ENCODE measurements at regions of chr5 and their contacts with region 1.

Region 1: DNA sequence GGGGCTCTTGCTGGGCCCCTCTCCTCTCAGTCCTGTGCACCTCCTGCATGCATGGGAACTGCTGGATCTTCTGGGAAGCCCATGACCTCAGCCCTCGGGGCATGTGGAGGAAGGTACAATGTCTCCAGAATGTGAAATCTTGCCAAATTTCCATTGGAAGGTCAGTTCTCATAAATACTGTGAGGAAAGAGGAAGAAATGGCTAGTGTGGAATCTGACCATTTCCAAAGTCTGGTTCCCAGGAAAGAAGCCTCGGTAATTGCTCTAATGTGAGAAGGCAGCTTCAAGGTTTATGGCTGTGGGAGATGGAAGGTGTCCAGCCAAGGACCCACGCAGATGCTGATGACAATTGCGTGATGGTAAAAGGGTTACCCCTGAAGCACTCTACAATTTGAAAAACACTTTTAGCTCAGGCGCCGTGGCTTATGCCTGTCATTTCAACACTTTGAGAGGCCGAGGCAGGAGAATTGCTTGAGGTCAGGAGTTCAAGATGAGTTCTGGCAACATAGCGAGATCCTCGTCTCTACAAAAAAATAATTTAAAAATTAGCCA is 8.1 kb upstream of the IL17B start:
- DNase-seq: no peak
- H3K4me3 ChIP-seq: no peak overlapping the region
- H3K27ac ChIP-seq: peak overlapping the region; percentile 72 to 74
- H3K4me1 ChIP-seq: no peaks in the 10 kb centered on the region
- H3K27me3 ChIP-seq: no peaks in the 10 kb centered on the region
- CTCF ChIP-seq: no peak
- POLR2A ChIP-seq: no peak

Region 2: GRCh38 chr5:149406203-149406978 is 19.2 kb after region 1 on chr5:
- intact Hi-C with region 1: loop called (anchors 2 kb)
- DNase-seq: no peak
- H3K4me3 ChIP-seq: peak overlapping the region; percentile 37 to 44
- H3K27ac ChIP-seq: peak overlapping the region; percentile 82 to 89
- H3K4me1 ChIP-seq: no peaks in the 10 kb centered on the region
- H3K27me3 ChIP-seq: no peaks in the 10 kb centered on the region
- CTCF ChIP-seq: no peak
- POLR2A ChIP-seq: peak; percentile 28

Region 3: DNA sequence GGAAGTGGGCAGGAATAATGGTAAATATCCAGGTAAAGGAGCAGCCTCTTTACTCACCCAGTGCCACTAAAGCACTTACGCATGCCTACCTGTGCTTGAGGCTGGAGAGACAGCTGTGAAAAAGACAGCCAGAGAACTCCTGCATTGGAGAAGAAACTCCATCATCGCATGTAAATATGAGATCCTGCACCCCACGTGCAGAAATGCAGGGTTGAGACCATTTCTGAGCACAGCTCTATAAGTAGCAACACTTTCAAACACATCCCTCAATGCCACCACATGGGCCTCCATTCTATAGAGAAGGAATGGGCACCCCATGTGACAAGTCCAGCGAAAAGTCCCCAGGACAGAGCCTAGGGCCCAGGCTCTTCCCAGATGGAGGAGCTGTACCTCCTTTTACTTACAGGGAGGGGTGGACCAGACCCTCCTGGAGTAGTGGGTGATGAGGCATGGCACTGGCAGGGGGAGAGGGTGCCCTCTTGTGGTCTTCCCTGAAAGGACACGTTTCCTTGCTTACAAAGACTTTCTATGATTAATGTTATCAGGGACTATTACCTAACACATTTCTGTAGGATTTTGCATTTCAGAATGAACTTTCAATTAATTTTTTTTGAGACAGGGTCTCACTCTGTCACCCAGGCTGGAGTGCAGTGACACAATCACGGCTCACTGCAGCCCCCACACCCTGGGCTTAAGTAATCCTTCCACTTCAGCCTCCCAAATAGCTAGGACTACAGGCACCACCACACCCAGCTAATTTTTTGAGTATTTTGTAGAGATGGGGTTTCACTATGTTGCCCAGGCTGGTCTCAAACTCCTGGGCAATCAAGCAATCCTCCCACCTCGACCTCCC is 47.2 kb after region 1 on chr5:
- intact Hi-C with region 1: loop called (anchors 1 kb)
- DNase-seq: peak; percentile 56
- H3K4me3 ChIP-seq: no peak overlapping the region
- H3K27ac ChIP-seq: no peak overlapping the region
- H3K4me1 ChIP-seq: peaks cover 12% of the 10 kb centered on the region
- H3K27me3 ChIP-seq: no peaks in the 10 kb centered on the region
- CTCF ChIP-seq: peak; percentile 62 to 69 (median 66)
- POLR2A ChIP-seq: no peak

Region 4: GRCh38 chr5:149504677-149505076 is 117.5 kb after region 1 on chr5:
- intact Hi-C with region 1: no loop called
- DNase-seq: no peak
- H3K4me3 ChIP-seq: no peak overlapping the region
- H3K27ac ChIP-seq: peak overlapping the region in 1 of 2 donors; percentile 1
- H3K4me1 ChIP-seq: no peaks in the 10 kb centered on the region
- H3K27me3 ChIP-seq: no peaks in the 10 kb centered on the region
- CTCF ChIP-seq: no peak
- POLR2A ChIP-seq: no peak